Prostate gland (tissue), 2 donors: ENCODE measurements at regions of chr1 and their contacts with region 1.

Region 1: DNA sequence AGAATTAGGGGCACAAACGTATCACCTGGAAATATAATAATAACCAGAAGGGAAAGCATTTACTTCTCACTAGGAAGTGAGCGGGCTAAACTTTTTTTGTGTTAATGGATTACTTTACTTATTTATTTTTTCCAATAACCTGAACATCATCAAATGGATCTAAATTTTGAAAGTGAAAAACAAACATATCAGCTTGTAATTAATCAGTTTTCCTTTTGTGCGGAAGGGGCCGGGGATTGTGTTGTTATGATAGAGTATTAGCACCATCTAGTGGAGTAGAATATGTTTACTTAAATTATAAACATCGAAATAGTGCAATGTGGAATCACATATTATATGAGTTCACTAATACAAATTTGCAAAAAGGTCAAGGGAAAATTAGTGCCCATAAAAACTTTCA is 9.0 kb downstream of the CFH start:
- DNase-seq: no peak
- H3K4me3 ChIP-seq: no peak overlapping the region
- H3K27ac ChIP-seq: no peak overlapping the region
- H3K4me1 ChIP-seq: no peaks in the 10 kb centered on the region
- H3K27me3 ChIP-seq: no peaks in the 10 kb centered on the region
- CTCF ChIP-seq: peak in 3 of 4 experiments; percentile 51 to 78 (median 77)
- POLR2A ChIP-seq: no peak

Region 2: GRCh38 chr1:196148367-196148970 is 512.4 kb before region 1 on chr1:
- intact Hi-C with region 1: loop called (anchors 5 kb)
- DNase-seq: no peak
- H3K4me3 ChIP-seq: no peak overlapping the region
- H3K27ac ChIP-seq: no peak overlapping the region
- H3K4me1 ChIP-seq: no peaks in the 10 kb centered on the region
- H3K27me3 ChIP-seq: no peaks in the 10 kb centered on the region
- CTCF ChIP-seq: peak in 3 of 4 experiments; percentile 42 to 53 (median 49)
- POLR2A ChIP-seq: no peak

Region 3: GRCh38 chr1:196355206-196355786 is 305.6 kb before region 1 on chr1:
- intact Hi-C with region 1: loop called (anchors 2 kb)
- DNase-seq: no peak
- H3K4me3 ChIP-seq: no peak overlapping the region
- H3K27ac ChIP-seq: no peak overlapping the region
- H3K4me1 ChIP-seq: no peaks in the 10 kb centered on the region
- H3K27me3 ChIP-seq: no peaks in the 10 kb centered on the region
- CTCF ChIP-seq: peak in 2 of 4 experiments; percentile 38 to 53
- POLR2A ChIP-seq: no peak